ENCODE measurements at regions of chr1 and their contacts with region 1.

Region 1: GRCh38 chr1:202656951-202657646 is 53.2 kb downstream of the SYT2 start:
- DNase-seq: peak; percentile 60 to 73
- H3K4me3 ChIP-seq: no peak overlapping the region
- H3K4me3 Mint-ChIP-seq: no peak overlapping the region
- H3K27ac Mint-ChIP-seq: no peak overlapping the region
- H3K4me1 ChIP-seq: no peaks in the 10 kb centered on the region
- H3K4me1 Mint-ChIP-seq: no peaks in the 10 kb centered on the region
- H3K27me3 ChIP-seq: no peaks in the 10 kb centered on the region; the same call in 1 of the 2 replicates
- H3K27me3 Mint-ChIP-seq: peaks cover 18% of the 10 kb centered on the region
- CTCF ChIP-seq: peak; percentile 44 to 45

Region 2: DNA sequence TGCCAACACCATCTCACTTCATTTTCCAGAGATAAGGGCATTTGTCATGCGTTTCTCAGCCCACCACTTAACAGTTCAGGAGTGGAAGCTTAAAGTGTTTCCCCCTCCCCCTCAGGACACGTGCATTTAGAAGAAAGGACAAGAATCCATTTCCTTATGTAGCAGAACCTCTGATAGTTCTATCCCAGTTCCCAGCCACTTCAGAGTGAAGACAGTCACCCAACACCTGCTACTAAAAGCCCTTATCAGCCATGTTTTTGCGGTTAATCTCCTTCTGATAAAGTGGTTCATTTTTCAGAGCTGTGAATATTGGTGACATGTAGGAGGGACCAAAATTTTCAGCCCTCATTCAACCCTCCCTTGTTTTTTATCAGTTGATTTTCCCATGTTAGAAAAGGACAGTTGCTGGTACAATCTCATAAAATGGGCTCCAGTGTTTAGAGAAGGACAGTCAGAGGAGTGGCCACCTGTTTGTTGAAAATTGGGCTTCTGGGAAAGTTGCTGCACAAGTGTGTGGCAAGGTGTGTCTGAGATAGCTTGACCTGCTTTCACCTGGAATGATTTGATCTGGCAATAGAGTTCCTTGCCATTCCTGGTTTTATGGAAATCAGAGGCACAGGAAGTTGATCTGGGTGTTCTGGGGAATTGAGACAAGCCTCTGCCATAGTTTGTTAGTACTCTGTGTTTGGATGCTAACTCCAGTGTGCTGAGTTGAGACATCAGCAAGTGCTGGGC is 194.6 kb before region 1 on chr1:
- CTCF ChIA-PET with region 1: no interaction called
- POLR2A ChIA-PET with region 1: no interaction called
- intact Hi-C with region 1: loop called (anchors 5 kb)
- DNase-seq: no peak
- H3K4me3 ChIP-seq: no peak overlapping the region
- H3K4me3 Mint-ChIP-seq: no peak overlapping the region
- H3K27ac Mint-ChIP-seq: no peak overlapping the region
- H3K4me1 ChIP-seq: peaks cover 8% of the 10 kb centered on the region
- H3K4me1 Mint-ChIP-seq: peaks cover 8% of the 10 kb centered on the region
- H3K27me3 ChIP-seq: no peaks in the 10 kb centered on the region
- H3K27me3 Mint-ChIP-seq: no peaks in the 10 kb centered on the region
- CTCF ChIP-seq: no peak

Region 3: GRCh38 chr1:202576816-202577215 is 80.3 kb before region 1 on chr1:
- CTCF ChIA-PET with region 1: no interaction called
- POLR2A ChIA-PET with region 1: no interaction called
- intact Hi-C with region 1: no loop called
- DNase-seq: no peak
- H3K4me3 ChIP-seq: no peak overlapping the region
- H3K4me3 Mint-ChIP-seq: no peak overlapping the region
- H3K27ac Mint-ChIP-seq: no peak overlapping the region
- H3K4me1 ChIP-seq: no peaks in the 10 kb centered on the region
- H3K4me1 Mint-ChIP-seq: no peaks in the 10 kb centered on the region
- H3K27me3 ChIP-seq: no peaks in the 10 kb centered on the region
- H3K27me3 Mint-ChIP-seq: no peaks in the 10 kb centered on the region
- CTCF ChIP-seq: no peak

Region 4: DNA sequence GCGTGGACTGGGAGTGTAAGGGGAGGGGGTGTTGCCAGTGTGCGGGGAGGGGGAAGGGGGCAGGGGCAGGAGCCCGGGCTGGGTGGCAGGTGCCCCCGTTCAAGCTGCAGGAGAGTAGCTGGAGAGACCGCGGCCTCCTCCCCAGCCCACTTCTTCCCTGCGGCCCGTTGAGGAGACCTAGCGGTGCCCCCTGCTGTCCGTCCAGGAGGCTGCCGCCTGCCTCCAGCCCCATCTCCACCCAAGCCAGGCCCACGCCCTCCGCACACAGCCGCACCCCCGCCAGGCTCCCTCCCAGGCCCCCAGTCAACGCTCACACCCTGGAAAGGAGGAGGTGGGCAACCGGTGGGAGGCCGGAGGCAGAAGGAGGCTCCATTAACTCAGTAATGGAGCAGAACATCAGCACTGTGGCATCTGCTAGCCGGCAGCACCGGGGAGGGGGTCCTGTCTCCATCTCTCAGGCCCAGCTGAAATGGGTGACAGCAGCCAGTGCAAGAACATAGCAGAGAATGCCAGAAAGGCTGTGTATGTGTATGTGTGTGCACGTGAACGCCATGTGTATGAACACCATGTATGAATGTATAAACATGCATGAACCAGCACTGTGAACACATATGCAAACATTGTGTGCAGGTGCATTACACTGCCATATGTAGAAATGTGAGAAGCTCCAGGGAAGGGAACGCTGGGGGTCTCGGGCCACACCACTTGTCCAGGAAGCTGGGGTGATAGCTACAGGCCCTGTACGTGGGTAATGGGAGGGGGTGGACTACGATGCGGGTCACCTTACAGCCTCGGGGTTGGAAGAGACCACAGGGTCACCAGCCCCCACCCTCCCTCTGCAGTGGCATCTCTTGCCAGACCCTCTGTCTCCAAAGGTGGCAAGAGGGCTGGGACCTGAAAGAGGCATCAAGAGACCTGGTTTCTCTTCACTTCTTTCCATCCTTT is 31.4 kb before region 1 on chr1:
- CTCF ChIA-PET with region 1: no interaction called
- POLR2A ChIA-PET with region 1: no interaction called
- intact Hi-C with region 1: no loop called
- DNase-seq: peak; percentile 56 to 61
- H3K4me3 ChIP-seq: no peak overlapping the region
- H3K4me3 Mint-ChIP-seq: no peak overlapping the region
- H3K27ac Mint-ChIP-seq: no peak overlapping the region
- H3K4me1 ChIP-seq: no peaks in the 10 kb centered on the region
- H3K4me1 Mint-ChIP-seq: no peaks in the 10 kb centered on the region
- H3K27me3 ChIP-seq: no peaks in the 10 kb centered on the region
- H3K27me3 Mint-ChIP-seq: no peaks in the 10 kb centered on the region
- CTCF ChIP-seq: peak; percentile 49 to 52

Region 5: DNA sequence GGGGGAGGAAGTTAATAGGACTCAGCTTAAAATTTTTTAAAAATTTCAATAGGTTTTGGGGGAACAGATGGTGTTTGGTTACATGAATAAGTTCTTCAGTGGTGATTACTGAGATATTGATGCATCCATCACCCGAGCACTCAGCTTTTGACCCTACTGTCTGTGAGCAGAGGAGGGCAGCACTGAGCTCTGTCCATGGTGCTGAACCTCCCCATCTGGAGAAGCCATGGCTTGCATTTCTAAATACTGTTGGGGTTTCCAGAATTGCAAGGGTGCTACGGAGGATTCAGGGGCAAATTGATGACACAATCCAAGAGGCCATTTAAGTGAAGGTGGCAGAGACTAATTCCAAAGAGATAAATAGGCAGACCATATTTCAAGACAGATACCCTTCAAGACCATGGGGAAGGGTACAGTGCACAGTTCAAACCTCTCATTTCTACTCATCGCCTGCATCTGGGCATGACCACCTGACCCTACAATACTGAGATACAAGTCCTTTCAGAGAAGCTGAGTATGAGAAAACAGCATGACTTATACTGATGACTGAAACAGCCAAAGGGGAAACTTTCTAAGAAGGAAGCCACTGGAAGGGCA is 36.0 kb after region 1 on chr1:
- CTCF ChIA-PET with region 1: interaction called, 5 read pairs
- POLR2A ChIA-PET with region 1: no interaction called
- intact Hi-C with region 1: loop called (anchors 1 kb)
- DNase-seq: peak; percentile 66 to 81
- H3K4me3 ChIP-seq: no peak overlapping the region
- H3K4me3 Mint-ChIP-seq: no peak overlapping the region
- H3K27ac Mint-ChIP-seq: no peak overlapping the region
- H3K4me1 ChIP-seq: no peaks in the 10 kb centered on the region
- H3K4me1 Mint-ChIP-seq: no peaks in the 10 kb centered on the region
- H3K27me3 ChIP-seq: no peaks in the 10 kb centered on the region
- H3K27me3 Mint-ChIP-seq: peaks cover 24% of the 10 kb centered on the region
- CTCF ChIP-seq: peak in 1 of 2 experiments; percentile 45